Naive thymus-derived CD4-positive, alpha-beta T cell (primary cell): ENCODE measurements at regions of chr3 and their contacts with region 1.

Region 1: GRCh38 chr3:132504375-132504933 is 87.2 kb downstream of the DNAJC13 start:
- DNase-seq: no peak
- ATAC-seq: no peak
- H3K4me3 ChIP-seq: no peak overlapping the region
- H3K4me3 Mint-ChIP-seq: no peak overlapping the region
- H3K27ac ChIP-seq: no peak overlapping the region
- H3K27ac Mint-ChIP-seq: no peak overlapping the region
- H3K4me1 ChIP-seq: no peaks in the 10 kb centered on the region
- H3K4me1 Mint-ChIP-seq: peaks cover 0 to 5% (median 0%) of the 10 kb centered on the region in 7 donors
- H3K27me3 ChIP-seq: no peaks in the 10 kb centered on the region
- H3K27me3 Mint-ChIP-seq: no peaks in the 10 kb centered on the region

Region 2: DNA sequence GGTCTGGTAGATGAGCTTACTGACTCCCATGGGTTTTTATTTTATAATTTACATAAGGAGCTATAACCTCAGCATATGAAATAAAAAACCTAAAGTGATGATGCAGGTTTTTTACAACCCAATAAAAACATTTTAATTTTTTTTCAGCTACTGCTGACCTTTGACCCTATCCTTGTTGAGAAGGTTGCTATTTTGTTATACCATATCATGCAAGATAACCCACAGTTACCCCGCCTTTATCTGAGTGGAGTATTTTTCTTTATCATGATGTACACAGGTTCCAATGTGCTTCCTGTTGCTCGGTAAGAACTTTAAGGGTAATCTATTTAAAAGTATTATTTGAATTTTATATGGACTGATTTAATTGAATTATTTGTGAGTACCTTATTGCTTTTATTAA is 16.3 kb before region 1 on chr3:
- CTCF ChIA-PET with region 1: no interaction called
- POLR2A ChIA-PET with region 1: no interaction called
- intact Hi-C with region 1: loop called in 1 of 2 experiments (anchors 2 kb)
- DNase-seq: no peak
- ATAC-seq: no peak
- H3K4me3 ChIP-seq: no peak overlapping the region
- H3K4me3 Mint-ChIP-seq: no peak overlapping the region
- H3K27ac ChIP-seq: no peak overlapping the region
- H3K27ac Mint-ChIP-seq: no peak overlapping the region
- H3K4me1 ChIP-seq: no peaks in the 10 kb centered on the region
- H3K4me1 Mint-ChIP-seq: peaks cover 0 to 8% (median 0%) of the 10 kb centered on the region in 7 donors
- H3K27me3 ChIP-seq: no peaks in the 10 kb centered on the region
- H3K27me3 Mint-ChIP-seq: no peaks in the 10 kb centered on the region